ENCODE measurements at regions of chr22 and their contacts with region 1.

Region 1: DNA sequence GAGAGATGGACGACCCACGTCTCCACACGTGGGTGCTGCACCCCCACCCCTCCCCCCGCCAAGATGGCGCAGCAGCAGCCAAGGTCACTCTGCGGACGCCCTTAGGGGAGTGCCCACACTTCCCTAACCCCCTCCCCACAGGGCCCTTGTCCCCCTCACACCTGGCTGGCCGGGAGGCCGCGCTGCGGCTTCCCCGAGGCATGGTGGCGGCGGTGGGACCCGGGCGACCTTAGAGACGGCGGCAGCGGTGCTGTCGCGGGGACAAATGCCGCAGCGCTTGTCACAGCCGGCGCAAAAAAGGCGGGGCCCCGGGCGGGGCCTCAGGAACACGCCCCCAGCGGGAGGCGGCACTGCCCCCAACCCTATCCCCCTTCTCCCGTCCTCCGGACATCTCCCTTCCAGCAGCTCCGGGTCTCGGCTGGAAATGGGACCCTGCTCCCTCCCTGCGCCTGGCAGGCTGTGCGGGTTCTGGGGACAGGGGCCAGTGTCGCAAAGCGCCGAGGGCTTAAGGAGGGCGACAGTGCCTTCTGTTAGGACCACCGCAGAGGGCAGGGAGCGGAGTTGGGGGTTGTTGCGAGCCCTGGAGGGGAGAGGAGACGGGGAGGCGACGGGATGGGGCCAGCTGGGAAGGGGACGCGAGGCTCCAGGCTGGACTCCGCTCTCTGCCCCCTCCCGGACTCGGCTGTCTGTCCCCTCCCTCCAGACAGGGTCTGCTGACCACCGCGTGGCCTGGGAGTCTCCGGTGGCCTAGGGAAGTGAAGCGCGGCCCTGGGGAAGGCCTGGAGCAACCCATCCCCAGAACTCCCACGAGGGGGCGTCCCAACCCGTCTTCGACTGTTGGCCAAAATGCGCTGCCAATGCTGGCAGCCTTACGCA is at the start of gene CHCHD10:
- DNase-seq: no peak
- ATAC-seq: peak; percentile 76
- H3K4me3 ChIP-seq: peak within 1 kb of the TSS; percentile 74
- H3K27ac ChIP-seq: peak within 1 kb of the TSS; percentile 83
- H3K4me1 ChIP-seq: peaks cover 33% of the 10 kb centered on the region
- H3K27me3 ChIP-seq: no peaks in the 10 kb centered on the region
- CTCF ChIP-seq: peak; percentile 59 to 80 (median 75)
- EP300 ChIP-seq: no peak
- POLR2A ChIP-seq: peak; percentile 89
- RAD21 ChIP-seq: peak; percentile 53
- polyA plus RNA-seq, gene CHCHD10: 13.2 to 216 TPM

Region 2: DNA sequence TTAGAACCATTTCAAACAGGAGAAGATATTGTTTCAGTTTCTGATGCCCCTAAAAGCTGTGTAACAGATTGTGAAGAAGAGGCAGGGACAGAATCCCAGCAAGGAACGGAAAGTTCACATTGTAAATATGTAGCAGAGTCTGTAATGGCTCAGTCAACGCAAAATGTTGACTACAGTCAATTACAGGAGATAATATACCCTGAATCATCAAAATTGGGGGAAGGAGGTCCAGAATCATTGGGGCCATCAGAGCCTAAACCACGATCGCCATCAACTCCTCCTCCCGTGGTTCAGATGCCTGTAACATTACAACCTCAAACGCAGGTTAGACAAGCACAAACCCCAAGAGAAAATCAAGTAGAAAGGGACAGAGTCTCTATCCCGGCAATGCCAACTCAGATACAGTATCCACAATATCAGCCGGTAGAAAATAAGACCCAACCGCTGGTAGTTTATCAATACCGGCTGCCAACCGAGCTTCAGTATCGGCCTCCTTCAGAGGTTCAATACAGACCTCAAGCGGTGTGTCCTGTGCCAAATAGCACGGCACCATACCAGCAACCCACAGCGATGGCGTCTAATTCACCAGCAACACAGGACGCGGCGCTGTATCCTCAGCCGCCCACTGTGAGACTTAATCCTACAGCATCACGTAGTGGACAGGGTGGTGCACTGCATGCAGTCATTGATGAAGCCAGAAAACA is 228.6 kb before region 1 on chr22:
- CTCF ChIA-PET with region 1: no interaction called
- POLR2A ChIA-PET with region 1: no interaction called
- RAD21 ChIA-PET with region 1: no interaction called
- SMC1A ChIA-PET with region 1: no interaction called
- in situ Hi-C with region 1: no loop called
- intact Hi-C with region 1: loop called (anchors 5 kb)
- DNase-seq: peak; percentile 36
- ATAC-seq: peak; percentile 100
- H3K4me3 ChIP-seq: no peak overlapping the region
- H3K27ac ChIP-seq: no peak overlapping the region
- H3K4me1 ChIP-seq: no peaks in the 10 kb centered on the region
- H3K27me3 ChIP-seq: peaks cover 0 to 2% of the 10 kb centered on the region in 2 experiments; a peak in 2 of 4 replicates
- CTCF ChIP-seq: peak; percentile 78 to 90 (median 85)
- EP300 ChIP-seq: no peak
- POLR2A ChIP-seq: no peak
- RAD21 ChIP-seq: peak; percentile 86

Region 3: DNA sequence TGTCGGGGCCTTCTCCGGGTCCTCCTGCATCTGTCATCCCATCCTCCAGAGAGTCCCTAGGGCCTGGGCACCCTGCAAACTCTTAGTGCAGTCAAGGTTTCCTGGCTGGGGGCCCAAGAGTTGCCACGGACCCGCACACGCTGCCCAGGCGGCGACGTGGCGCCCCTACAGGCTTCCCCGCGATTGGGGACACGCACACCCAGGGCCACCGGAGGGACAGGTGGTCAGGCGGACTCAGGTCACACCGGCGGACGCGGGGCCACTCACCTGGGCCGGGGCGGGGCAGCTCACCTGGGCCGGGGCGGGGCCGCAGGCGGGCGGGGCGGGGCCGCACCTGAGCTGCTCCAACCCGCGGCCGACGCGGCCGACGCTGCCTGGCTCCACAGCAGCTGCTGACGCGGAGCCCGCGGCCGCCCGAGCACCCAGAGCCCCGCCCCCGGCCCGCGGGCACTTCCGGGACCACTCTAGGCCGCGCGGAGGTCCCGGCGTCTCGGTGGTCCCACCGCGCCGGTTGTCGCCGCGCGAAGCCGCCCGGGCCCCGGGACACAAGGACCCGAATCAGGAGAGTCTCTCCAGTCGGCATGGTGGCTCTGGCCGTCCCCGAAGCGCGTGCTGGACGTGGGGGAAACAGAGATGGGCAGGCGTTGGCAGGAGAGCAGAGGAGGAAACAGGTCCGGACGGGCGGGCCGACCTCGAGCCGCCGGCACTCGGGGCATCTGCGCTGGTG is 17.0 kb before region 1 on chr22 and contains the start of gene ZNF70:
- CTCF ChIA-PET with region 1: interaction called, 8 read pairs
- POLR2A ChIA-PET with region 1: interaction called, 9 read pairs
- RAD21 ChIA-PET with region 1: interaction called, 5 read pairs
- SMC1A ChIA-PET with region 1: interaction called, 8 read pairs
- in situ Hi-C with region 1: no loop called
- intact Hi-C with region 1: loop called (anchors 2 kb)
- DNase-seq: no peak
- ATAC-seq: peak; percentile 96
- H3K4me3 ChIP-seq: peak within 1 kb of the TSS; percentile 85
- H3K27ac ChIP-seq: peak within 1 kb of the TSS; percentile 88
- H3K4me1 ChIP-seq: peaks cover 30% of the 10 kb centered on the region
- H3K27me3 ChIP-seq: no peaks in the 10 kb centered on the region
- CTCF ChIP-seq: peak in 2 of 3 experiments; percentile 13 to 46; a peak in 1 of 6 replicates
- EP300 ChIP-seq: no peak
- POLR2A ChIP-seq: peak; percentile 80; the same call in 1 of the 2 replicates
- RAD21 ChIP-seq: peak; percentile 18; the same call in 1 of the 2 replicates
- polyA plus RNA-seq, gene ZNF70: 0.15 to 0.21 TPM

Region 4: GRCh38 chr22:23777786-23778576 is 10.1 kb after region 1 on chr22:
- CTCF ChIA-PET with region 1: no interaction called
- POLR2A ChIA-PET with region 1: no interaction called
- RAD21 ChIA-PET with region 1: no interaction called
- SMC1A ChIA-PET with region 1: no interaction called
- in situ Hi-C with region 1: no loop called
- intact Hi-C with region 1: no loop called
- DNase-seq: no peak
- ATAC-seq: no peak
- H3K4me3 ChIP-seq: no peak overlapping the region
- H3K27ac ChIP-seq: no peak overlapping the region
- H3K4me1 ChIP-seq: no peaks in the 10 kb centered on the region
- H3K27me3 ChIP-seq: peaks cover 2% of the 10 kb centered on the region in 2 experiments; a peak in 2 of 4 replicates
- CTCF ChIP-seq: no peak
- EP300 ChIP-seq: no peak
- POLR2A ChIP-seq: no peak
- RAD21 ChIP-seq: no peak

Region 5: GRCh38 chr22:23838681-23839468 is 71.0 kb after region 1 on chr22 and contains the start of gene DERL3:
- CTCF ChIA-PET with region 1: interaction called, 197 read pairs
- POLR2A ChIA-PET with region 1: interaction called, 18 read pairs
- RAD21 ChIA-PET with region 1: interaction called, 38 read pairs
- SMC1A ChIA-PET with region 1: interaction called, 40 read pairs
- in situ Hi-C with region 1: no loop called
- intact Hi-C with region 1: no loop called
- DNase-seq: peak; percentile 98
- ATAC-seq: peak; percentile 95
- H3K4me3 ChIP-seq: peak within 1 kb of the TSS; percentile 76
- H3K27ac ChIP-seq: peak within 1 kb of the TSS; percentile 56
- H3K4me1 ChIP-seq: peaks cover 25% of the 10 kb centered on the region
- H3K27me3 ChIP-seq: no peaks in the 10 kb centered on the region
- CTCF ChIP-seq: no peak
- EP300 ChIP-seq: no peak; a peak in 1 of 4 replicates
- POLR2A ChIP-seq: peak; percentile 70
- RAD21 ChIP-seq: no peak
- polyA plus RNA-seq, gene DERL3: 4.1 to 6.4 TPM

Region 6: GRCh38 chr22:23857606-23858483 is 89.9 kb after region 1 on chr22 and contains the start of gene SLC2A11:
- CTCF ChIA-PET with region 1: interaction called, 197 read pairs
- POLR2A ChIA-PET with region 1: interaction called, 7 read pairs
- RAD21 ChIA-PET with region 1: interaction called, 16 read pairs
- SMC1A ChIA-PET with region 1: interaction called, 10 read pairs
- in situ Hi-C with region 1: no loop called
- intact Hi-C with region 1: no loop called
- DNase-seq: peak; percentile 96
- ATAC-seq: peak; percentile 97
- H3K4me3 ChIP-seq: peak within 1 kb of the TSS; percentile 89
- H3K27ac ChIP-seq: peak within 1 kb of the TSS; percentile 91
- H3K4me1 ChIP-seq: peaks cover 11% of the 10 kb centered on the region
- H3K27me3 ChIP-seq: no peaks in the 10 kb centered on the region
- CTCF ChIP-seq: peak; percentile 17 to 39 (median 26); a peak in 2 of 6 replicates
- EP300 ChIP-seq: no peak
- POLR2A ChIP-seq: peak; percentile 96
- RAD21 ChIP-seq: no peak
- polyA plus RNA-seq, gene SLC2A11: 0.98 to 2.9 TPM

Region 7: DNA sequence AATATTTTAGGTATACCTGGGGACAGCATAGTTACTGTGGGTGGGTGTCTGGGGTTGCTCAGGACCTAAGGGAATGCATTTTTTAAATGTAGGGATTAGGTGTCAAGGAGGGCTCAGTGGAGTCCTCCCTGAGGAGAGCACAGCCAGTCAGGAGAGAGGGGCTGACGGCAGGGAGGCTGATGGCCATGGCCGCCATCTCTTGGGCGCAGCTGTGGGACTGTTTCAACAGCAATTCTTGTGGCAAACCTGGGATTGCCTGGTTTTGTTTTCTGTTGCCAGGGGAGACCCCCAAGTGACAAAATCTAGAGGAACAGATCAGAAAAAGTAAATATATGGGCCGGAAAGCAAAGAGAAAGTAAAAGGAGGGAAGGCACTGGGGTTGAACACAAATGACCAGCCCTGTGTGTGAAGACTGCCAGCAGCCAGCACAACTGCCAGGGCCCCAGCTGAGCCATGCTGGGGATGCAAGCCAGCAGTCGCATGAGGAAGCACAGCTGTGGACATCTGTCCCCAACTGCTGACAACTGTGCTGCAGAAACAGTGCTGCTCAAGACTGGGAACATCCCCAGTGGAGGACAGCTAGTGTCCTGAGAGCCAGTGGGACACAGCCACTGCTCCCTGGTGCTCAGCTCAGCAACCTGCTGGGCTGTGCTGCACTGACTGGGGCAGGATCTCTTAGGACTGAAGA is 136.8 kb after region 1 on chr22:
- CTCF ChIA-PET with region 1: no interaction called
- POLR2A ChIA-PET with region 1: no interaction called
- RAD21 ChIA-PET with region 1: no interaction called
- SMC1A ChIA-PET with region 1: no interaction called
- in situ Hi-C with region 1: no loop called
- intact Hi-C with region 1: no loop called
- DNase-seq: no peak
- ATAC-seq: no peak
- H3K4me3 ChIP-seq: no peak overlapping the region
- H3K27ac ChIP-seq: no peak overlapping the region
- H3K4me1 ChIP-seq: no peaks in the 10 kb centered on the region
- H3K27me3 ChIP-seq: no peaks in the 10 kb centered on the region
- CTCF ChIP-seq: no peak
- EP300 ChIP-seq: no peak
- POLR2A ChIP-seq: no peak
- RAD21 ChIP-seq: no peak

Region 8: DNA sequence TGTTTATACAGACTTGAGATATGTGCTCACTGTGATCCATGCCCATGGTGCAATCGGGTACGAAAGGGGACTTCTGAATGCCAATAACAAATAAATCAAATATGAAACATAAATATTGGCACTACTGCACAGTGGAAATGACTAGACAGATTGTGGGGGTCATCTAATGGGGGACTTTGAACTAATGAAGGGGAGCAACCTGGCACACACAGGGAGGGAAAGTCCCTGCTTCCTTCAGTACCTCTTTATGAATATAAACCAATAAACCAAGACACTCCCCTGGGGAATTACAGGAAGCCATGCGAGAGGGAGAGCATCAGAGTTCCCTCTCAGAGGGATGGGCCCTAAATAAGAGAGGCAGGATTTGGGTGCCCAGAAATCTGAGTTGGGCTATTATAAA is 147.4 kb after region 1 on chr22:
- CTCF ChIA-PET with region 1: no interaction called
- POLR2A ChIA-PET with region 1: no interaction called
- RAD21 ChIA-PET with region 1: no interaction called
- SMC1A ChIA-PET with region 1: no interaction called
- in situ Hi-C with region 1: no loop called
- intact Hi-C with region 1: no loop called
- DNase-seq: no peak
- ATAC-seq: peak; percentile 2; the same call in 2 of the 3 replicates
- H3K4me3 ChIP-seq: no peak overlapping the region
- H3K27ac ChIP-seq: 0 out of 2 replicates have a peak overlapping the region, but pooled peaks have one; percentile 99
- H3K4me1 ChIP-seq: peaks cover 2% of the 10 kb centered on the region; the same call in 1 of the 2 replicates
- H3K27me3 ChIP-seq: no peaks in the 10 kb centered on the region
- CTCF ChIP-seq: no peak
- EP300 ChIP-seq: no peak
- POLR2A ChIP-seq: no peak
- RAD21 ChIP-seq: no peak

Region 9: DNA sequence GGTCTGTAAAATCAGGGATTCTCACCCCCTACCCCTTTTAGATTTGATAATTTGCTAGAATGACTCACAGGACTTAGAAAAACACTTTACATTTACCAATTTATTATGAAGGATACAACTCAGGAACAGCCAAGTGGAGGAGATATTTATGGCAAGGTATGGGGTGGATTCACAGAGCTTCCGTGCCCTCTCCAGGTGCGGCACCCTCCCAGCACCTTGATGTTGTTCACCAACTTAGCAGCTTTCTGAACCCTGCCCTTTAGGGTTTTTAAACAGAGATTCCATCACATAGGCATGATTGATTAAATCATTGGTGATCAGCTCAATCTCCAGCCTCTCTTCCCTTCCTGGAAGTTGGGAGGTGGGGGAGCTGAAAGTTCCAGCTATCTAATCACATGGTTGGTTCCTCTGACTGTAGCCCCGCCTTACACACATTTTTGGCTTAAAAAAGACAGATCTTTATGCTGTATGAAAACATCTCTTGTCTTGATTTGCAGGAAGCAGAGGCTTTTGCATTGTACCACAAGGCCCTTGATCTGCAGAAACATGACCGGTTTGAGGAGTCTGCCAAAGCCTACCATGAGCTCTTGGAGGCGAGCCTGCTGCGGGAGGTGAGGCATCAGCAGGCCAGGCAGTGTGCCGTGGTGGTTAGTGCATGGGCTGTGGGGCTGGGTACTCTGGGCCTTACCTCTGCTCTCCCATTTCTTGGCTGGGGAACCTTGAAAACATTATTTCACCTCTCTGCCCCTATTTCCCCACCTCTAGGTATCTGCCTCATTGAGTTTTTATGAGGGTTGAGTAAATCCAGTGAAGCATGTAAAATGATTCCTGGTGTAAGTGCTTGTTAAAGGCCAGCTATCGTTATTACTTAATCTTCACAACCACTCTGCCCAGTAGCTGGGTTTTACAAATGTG is 270.2 kb after region 1 on chr22:
- CTCF ChIA-PET with region 1: no interaction called
- POLR2A ChIA-PET with region 1: no interaction called
- RAD21 ChIA-PET with region 1: no interaction called
- SMC1A ChIA-PET with region 1: no interaction called
- in situ Hi-C with region 1: no loop called
- intact Hi-C with region 1: no loop called
- DNase-seq: no peak
- ATAC-seq: no peak
- H3K4me3 ChIP-seq: no peak overlapping the region
- H3K27ac ChIP-seq: no peak overlapping the region
- H3K4me1 ChIP-seq: no peaks in the 10 kb centered on the region
- H3K27me3 ChIP-seq: no peaks in the 10 kb centered on the region
- CTCF ChIP-seq: no peak
- EP300 ChIP-seq: no peak
- POLR2A ChIP-seq: no peak
- RAD21 ChIP-seq: no peak